Endothelial cell of umbilical vein (primary cell): ENCODE measurements at regions of chr19 and their contacts with region 1.

Region 1: DNA sequence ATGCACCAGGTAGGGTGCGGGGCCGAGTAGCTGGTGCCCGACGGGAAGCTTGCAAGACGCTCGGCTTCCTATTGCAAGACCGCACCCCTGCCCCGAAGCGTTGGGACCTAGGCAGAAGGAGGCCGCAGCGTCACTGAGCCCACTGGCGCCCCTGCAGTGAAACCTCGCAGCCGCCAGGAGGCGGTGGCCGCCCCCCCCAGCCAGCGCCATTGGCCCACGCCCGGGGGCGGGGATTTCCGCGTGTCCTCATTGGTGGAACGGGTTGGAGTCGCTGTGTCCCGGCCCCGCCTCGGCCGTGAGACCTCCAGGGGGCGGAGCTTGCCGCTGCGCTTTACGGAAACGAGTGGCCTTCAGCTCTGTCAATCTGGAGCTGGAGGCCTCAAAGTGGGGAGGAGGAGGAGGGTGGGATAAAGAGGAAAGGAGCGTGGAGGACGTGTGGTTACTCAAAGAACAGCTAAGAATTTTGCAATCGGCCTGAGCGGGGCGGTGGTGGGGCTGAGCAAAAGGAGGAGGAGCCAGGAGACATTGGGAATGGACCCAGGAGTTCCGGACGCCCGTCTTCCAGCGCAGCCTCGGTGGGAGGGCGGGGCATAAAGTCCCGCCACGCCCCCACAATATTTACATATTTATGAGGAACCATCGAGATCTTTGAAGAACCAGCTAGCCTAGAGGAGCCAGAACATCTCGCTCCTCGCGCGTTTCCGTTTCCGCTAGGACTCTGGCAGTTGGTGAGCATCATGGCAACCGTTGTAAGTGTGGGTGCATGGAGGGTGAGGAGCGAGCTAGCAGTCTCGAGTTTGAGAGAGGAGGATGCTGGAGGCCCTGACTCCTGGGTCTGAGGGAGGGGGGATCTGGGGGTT is at the starts of genes GYS1 and RUVBL2:
- DNase-seq: peak; percentile 100
- H3K4me3 ChIP-seq: peak within 1 kb of the TSS; percentile 83 to 92 (median 86)
- H3K27ac ChIP-seq: peak within 1 kb of the TSS; percentile 61
- H3K4me1 ChIP-seq: peaks cover 14% of the 10 kb centered on the region
- H3K27me3 ChIP-seq: no peaks in the 10 kb centered on the region
- CTCF ChIP-seq: peak; percentile 98 to 100
- POLR2A ChIP-seq: peak; percentile 88
- total RNA-seq, gene GYS1: 53.9 and 58.9 TPM in 2 replicates
- total RNA-seq, gene RUVBL2: 110 and 115 TPM in 2 replicates

Region 2: DNA sequence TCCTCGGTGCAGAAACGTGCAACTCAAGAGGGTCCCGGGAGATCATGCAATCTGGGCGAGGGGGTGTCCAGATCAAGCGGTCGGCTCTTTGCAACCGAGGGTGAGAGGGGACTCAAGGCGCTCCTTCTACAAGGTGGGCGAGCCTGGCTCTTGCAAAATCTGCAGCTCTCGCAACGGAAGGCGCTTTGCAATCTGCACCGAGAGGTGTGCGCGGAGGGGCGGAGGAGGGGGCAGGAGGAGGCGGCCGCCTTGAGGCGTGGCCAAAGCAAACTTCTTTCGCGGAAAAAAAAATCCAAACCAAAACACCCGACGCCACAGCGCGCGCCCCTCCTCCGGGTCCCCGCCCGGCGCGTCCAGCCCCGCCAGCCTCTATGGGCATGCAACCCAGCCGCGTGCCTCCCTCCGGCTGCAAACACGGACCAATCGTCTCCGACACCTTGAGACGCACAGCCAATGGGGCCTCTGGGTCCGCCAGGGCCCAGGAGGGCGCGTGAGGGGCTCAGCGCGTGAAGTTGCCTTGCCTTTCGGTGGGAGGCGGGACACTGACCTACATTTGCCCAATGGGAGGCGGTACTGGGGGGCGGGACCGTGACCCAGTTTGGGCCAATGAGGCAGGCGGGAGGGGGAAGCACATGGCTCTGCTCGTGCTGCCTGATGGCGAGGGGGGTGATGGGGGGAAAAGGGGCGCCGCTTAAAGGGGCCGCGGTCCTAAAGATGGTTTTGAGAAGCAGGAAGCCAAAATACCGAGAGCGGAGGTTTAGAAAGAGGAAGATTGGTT is 356.0 kb before region 1 on chr19 and contains the start of gene DBP:
- CTCF ChIA-PET with region 1: no interaction called
- POLR2A ChIA-PET with region 1: no interaction called
- dilution Hi-C with region 1: no loop called
- intact Hi-C with region 1: loop called (anchors 10 kb)
- DNase-seq: peak; percentile 98
- H3K4me3 ChIP-seq: peak within 1 kb of the TSS in 2 of 3 experiments; percentile 30 to 34
- H3K27ac ChIP-seq: no peak within 1 kb of the TSS
- H3K4me1 ChIP-seq: peaks cover 26% of the 10 kb centered on the region
- H3K27me3 ChIP-seq: peaks cover 3 to 13% of the 10 kb centered on the region in 2 experiments
- CTCF ChIP-seq: no peak
- POLR2A ChIP-seq: no peak
- total RNA-seq, gene DBP: 0.78 and 1.5 TPM in 2 replicates

Region 3: GRCh38 chr19:48872182-48872883 is 121.1 kb before region 1 on chr19 and contains the start of gene PPP1R15A:
- CTCF ChIA-PET with region 1: interaction called, 5 read pairs
- POLR2A ChIA-PET with region 1: interaction called, 6 read pairs
- dilution Hi-C with region 1: no loop called
- intact Hi-C with region 1: loop called (anchors 1 kb)
- DNase-seq: peak; percentile 100
- H3K4me3 ChIP-seq: peak within 1 kb of the TSS; percentile 93 to 100 (median 100)
- H3K27ac ChIP-seq: peak within 1 kb of the TSS; percentile 100
- H3K4me1 ChIP-seq: peaks cover 29% of the 10 kb centered on the region
- H3K27me3 ChIP-seq: no peaks in the 10 kb centered on the region
- CTCF ChIP-seq: no peak
- POLR2A ChIP-seq: peak; percentile 100
- total RNA-seq, gene PPP1R15A: 67.4 and 73.4 TPM in 2 replicates

Region 4: GRCh38 chr19:49085020-49085867 is 91.8 kb after region 1 on chr19 and contains the start of gene SNRNP70:
- CTCF ChIA-PET with region 1: no interaction called
- POLR2A ChIA-PET with region 1: no interaction called
- dilution Hi-C with region 1: no loop called
- intact Hi-C with region 1: loop called (anchors 1 kb)
- DNase-seq: peak; percentile 99
- H3K4me3 ChIP-seq: peak within 1 kb of the TSS; percentile 75 to 93 (median 89)
- H3K27ac ChIP-seq: peak within 1 kb of the TSS; percentile 73
- H3K4me1 ChIP-seq: peaks cover 14% of the 10 kb centered on the region
- H3K27me3 ChIP-seq: peaks cover 2 to 3% of the 10 kb centered on the region in 2 experiments
- CTCF ChIP-seq: no peak
- POLR2A ChIP-seq: peak; percentile 95
- total RNA-seq, gene SNRNP70: 215 and 228 TPM in 2 replicates

Region 5: DNA sequence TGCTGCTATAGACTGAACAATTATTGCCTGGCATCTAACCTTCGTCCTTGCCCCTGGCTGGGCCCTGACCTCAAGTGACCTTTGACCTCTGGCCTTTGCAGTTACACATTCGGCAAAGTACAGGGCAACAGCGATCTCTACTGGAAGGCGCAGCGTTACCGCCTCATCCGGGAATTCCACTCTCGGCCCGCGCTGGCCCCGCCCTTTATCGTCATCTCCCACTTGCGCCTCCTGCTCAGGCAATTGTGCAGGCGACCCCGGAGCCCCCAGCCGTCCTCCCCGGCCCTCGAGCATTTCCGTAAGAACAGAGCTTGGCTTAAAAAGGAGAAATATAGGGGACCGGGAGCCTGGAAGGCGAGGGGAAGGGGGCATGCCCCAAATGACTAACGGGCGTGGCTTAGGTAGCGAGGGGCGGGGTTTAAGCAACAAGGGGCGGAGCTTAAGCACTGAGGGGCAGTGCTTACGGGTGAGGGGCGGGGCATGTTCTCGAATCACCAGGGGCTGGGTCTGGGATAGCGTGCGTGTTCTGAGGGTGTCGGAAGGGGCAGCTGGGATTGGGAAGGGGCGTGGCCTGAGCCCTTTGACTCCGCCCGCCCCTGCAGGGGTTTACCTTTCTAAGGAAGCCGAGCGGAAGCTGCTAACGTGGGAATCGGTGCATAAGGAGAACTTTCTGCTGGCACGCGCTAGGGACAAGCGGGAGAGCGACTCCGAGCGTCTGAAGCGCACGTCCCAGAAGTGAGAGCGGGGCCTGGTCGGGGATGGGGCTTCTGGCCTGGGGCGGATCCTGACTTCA is 216.9 kb after region 1 on chr19:
- CTCF ChIA-PET with region 1: interaction called, 6 read pairs
- POLR2A ChIA-PET with region 1: no interaction called
- dilution Hi-C with region 1: no loop called
- intact Hi-C with region 1: loop called (anchors 1 kb)
- DNase-seq: peak; percentile 9
- H3K4me3 ChIP-seq: no peak overlapping the region
- H3K27ac ChIP-seq: no peak overlapping the region
- H3K4me1 ChIP-seq: no peaks in the 10 kb centered on the region
- H3K27me3 ChIP-seq: no peaks in the 10 kb centered on the region
- CTCF ChIP-seq: no peak
- POLR2A ChIP-seq: no peak